A673 (cell line): ENCODE measurements at regions of chr16 and their contacts with region 1.

Region 1: GRCh38 chr16:50152807-50153452 is at the start of gene TENT4B:
- DNase-seq: peak; percentile 86
- H3K4me3 ChIP-seq: peak within 1 kb of the TSS; percentile 79
- H3K27ac ChIP-seq: peak within 1 kb of the TSS; percentile 97
- H3K4me1 ChIP-seq: peaks cover 17% of the 10 kb centered on the region
- H3K27me3 ChIP-seq: no peaks in the 10 kb centered on the region
- CTCF ChIP-seq: no peak
- total RNA-seq, gene TENT4B: 16.8 and 18.3 TPM in 2 replicates

Region 2: DNA sequence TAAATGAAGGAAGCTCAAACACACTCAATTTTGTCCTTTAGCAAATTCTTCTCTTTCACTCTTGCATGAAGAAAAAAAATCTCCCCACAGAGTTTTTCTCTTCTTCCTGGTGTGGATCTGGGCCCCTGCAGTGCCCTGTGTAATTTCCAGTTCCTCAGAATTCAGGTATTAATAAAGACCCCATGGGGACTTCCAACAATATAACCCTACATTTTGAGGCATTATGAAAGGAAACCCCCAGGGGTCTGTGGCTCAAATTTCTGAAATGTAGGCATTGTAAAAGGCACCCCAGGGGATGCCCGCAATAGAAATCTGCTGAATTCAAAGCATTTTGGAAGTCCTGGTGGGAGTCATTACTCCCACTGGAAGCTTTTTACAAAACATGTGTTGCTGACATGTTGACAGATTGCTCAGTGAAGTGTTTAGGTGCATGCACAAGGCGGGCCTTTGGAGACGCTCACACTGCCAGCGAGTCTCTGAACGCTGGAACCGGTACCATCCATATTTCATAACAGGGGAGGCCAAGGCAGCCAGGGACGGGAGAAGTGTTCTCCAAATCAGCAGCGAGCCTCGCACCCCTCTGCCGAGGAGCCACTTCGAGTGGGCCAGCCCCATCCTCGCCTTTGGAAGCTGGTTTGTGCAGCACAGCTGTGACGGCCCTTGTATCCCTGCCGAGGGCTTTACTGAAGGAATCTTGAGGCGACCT is 451.0 kb before region 1 on chr16:
- CTCF ChIA-PET with region 1: no interaction called
- POLR2A ChIA-PET with region 1: no interaction called
- intact Hi-C with region 1: no loop called
- DNase-seq: peak; percentile 99
- H3K4me3 ChIP-seq: peak overlapping the region; percentile 43
- H3K27ac ChIP-seq: peak overlapping the region; percentile 99
- H3K4me1 ChIP-seq: peaks cover 65% of the 10 kb centered on the region
- H3K27me3 ChIP-seq: no peaks in the 10 kb centered on the region
- CTCF ChIP-seq: no peak

Region 3: DNA sequence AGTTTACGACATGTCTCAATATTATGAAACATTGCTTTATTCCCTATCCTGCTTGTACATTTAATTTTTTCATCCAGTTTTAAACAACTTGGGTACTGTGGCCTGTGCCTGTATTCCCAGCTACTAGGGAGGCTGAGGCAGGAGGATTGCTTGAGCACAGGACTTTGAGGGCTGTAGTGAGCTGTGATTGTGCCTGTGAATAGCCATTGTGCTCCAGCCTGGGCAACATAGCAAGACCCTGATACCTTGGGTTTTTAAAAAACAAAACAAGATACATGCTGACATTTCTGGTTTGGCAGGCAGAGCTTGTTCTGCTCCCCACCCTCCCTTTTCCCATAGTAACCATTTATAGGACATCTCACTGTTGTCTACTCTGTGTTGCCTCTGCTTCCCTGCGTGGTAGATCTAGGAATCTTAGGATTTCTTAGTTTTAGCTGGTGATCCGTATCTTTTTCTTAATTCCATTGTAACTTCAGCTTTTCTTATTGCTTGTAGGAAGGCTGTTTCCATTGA is 35.7 kb after region 1 on chr16:
- CTCF ChIA-PET with region 1: interaction called, 5 read pairs
- POLR2A ChIA-PET with region 1: no interaction called
- intact Hi-C with region 1: loop called (anchors 1 kb)
- DNase-seq: no peak
- H3K4me3 ChIP-seq: no peak overlapping the region
- H3K27ac ChIP-seq: no peak overlapping the region
- H3K4me1 ChIP-seq: no peaks in the 10 kb centered on the region
- H3K27me3 ChIP-seq: no peaks in the 10 kb centered on the region
- CTCF ChIP-seq: no peak